Gastrocnemius medialis (tissue), 4 donors: ENCODE measurements at regions of chr14 and their contacts with region 1.

Region 1: GRCh38 chr14:55270832-55271565 is at the start of gene FBXO34:
- DNase-seq: peak; percentile 95 to 98
- ATAC-seq: peak; percentile 80 to 86
- H3K4me3 ChIP-seq: peak within 1 kb of the TSS; percentile 85 to 97 (median 94)
- H3K27ac ChIP-seq: peak within 1 kb of the TSS; percentile 95 to 99 (median 98)
- H3K4me1 ChIP-seq: peaks cover 30 to 33% of the 10 kb centered on the region in 2 donors
- H3K27me3 ChIP-seq: no peaks in the 10 kb centered on the region
- CTCF ChIP-seq: peak; percentile 99 to 100 (median 100)
- POLR2A ChIP-seq: peak; percentile 94 to 98
- total RNA-seq, gene FBXO34: 26.2 to 55.9 (median 40.7) TPM

Region 2: DNA sequence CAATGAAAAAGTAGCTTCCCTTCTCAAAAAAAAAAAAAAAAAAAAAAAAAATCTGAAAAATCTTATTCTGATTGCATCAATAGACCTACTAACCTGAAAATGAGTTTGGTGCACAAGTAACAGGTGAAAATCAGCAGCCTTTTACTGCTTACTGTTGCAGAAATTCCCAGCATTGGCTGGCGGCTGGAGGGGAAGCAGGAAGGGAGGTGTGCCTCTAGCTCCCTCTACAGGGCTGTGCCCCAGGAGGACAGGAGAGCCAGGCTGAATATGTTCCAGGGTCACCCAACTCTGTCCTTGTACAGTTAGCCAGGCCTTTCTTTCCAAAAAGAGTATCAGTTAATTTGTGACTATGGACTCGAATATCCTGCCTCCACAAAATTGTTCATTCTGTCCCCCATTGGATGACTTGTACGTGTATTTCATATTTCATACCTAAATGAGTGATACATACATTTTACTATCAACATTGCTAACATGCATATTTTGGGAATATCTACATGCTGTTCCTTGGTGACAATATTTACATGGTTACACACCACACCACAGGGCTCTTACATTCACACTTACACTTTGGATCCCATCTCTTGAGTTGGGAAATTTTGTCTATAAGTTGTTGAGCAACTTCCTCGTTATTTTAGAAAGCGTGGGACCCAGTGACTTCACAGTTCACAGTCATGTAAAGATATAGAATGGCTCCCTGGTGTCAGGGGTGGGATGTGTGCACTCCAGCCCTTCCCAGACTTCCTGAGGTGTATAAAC is 579.3 kb before region 1 on chr14:
- in situ Hi-C with region 1: no loop called
- intact Hi-C with region 1: loop called (anchors 10 kb)
- DNase-seq: peak; percentile 63 to 84
- ATAC-seq: peak; percentile 53 to 71
- H3K4me3 ChIP-seq: no peak overlapping the region
- H3K27ac ChIP-seq: peak overlapping the region; percentile 86 to 99 (median 92)
- H3K4me1 ChIP-seq: peaks cover 62 to 68% of the 10 kb centered on the region in 2 donors
- H3K27me3 ChIP-seq: no peaks in the 10 kb centered on the region
- CTCF ChIP-seq: peak; percentile 82 to 92 (median 89)
- POLR2A ChIP-seq: no peak

Region 3: GRCh38 chr14:55212634-55213033 is 58.4 kb before region 1 on chr14:
- in situ Hi-C with region 1: no loop called
- intact Hi-C with region 1: loop called (anchors 2 kb)
- DNase-seq: no peak
- ATAC-seq: no peak
- H3K4me3 ChIP-seq: no peak overlapping the region
- H3K27ac ChIP-seq: no peak overlapping the region
- H3K4me1 ChIP-seq: no peaks in the 10 kb centered on the region
- H3K27me3 ChIP-seq: no peaks in the 10 kb centered on the region
- CTCF ChIP-seq: no peak
- POLR2A ChIP-seq: no peak

Region 4: DNA sequence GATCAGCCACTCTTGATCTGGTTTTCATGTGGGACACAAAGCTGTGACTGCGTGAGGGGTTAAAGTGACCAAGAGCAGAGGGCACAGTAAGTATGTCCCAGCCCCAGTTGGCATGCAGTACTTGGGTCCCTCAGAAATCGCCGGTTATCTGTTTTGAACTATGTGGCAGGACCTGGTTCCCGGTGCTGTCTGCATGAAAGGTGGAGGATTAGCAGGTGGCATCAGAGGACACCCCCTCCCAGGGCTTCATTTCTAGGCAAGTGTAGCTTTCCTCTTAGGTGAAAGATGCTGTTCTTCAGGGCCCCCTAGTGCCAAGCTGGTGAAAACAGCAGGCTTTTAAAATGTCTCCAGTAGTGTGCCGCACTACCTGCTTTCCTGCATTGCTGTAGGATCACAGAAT is 83.5 kb after region 1 on chr14:
- in situ Hi-C with region 1: loop called in 2 of 4 experiments (anchors 10 kb)
- intact Hi-C with region 1: loop called (anchors 1 kb)
- DNase-seq: peak; percentile 27 to 59
- ATAC-seq: peak; percentile 79 to 91
- H3K4me3 ChIP-seq: no peak overlapping the region
- H3K27ac ChIP-seq: peak overlapping the region in 3 of 4 donors; percentile 64 to 74 (median 71)
- H3K4me1 ChIP-seq: peaks cover 11 to 14% of the 10 kb centered on the region in 2 donors
- H3K27me3 ChIP-seq: no peaks in the 10 kb centered on the region
- CTCF ChIP-seq: peak; percentile 40 to 67 (median 57)
- POLR2A ChIP-seq: no peak

Region 5: GRCh38 chr14:55411426-55412389 is 140.7 kb after region 1 on chr14 and contains the start of gene ATG14:
- in situ Hi-C with region 1: loop called in 2 of 4 experiments (anchors 5 to 10 kb)
- intact Hi-C with region 1: loop called (anchors 5 kb)
- DNase-seq: peak; percentile 81 to 88
- ATAC-seq: peak; percentile 94 to 98
- H3K4me3 ChIP-seq: peak within 1 kb of the TSS; percentile 82 to 98 (median 90)
- H3K27ac ChIP-seq: peak within 1 kb of the TSS; percentile 87 to 97 (median 95)
- H3K4me1 ChIP-seq: peaks cover 26 to 28% of the 10 kb centered on the region in 2 donors
- H3K27me3 ChIP-seq: no peaks in the 10 kb centered on the region
- CTCF ChIP-seq: peak in 2 of 5 experiments; percentile 9 to 15
- POLR2A ChIP-seq: peak; percentile 47 to 84
- total RNA-seq, gene ATG14: 12.6 to 20.0 (median 15.6) TPM

Region 6: GRCh38 chr14:55579724-55580469 is 308.9 kb after region 1 on chr14 and contains the start of gene KTN1:
- in situ Hi-C with region 1: no loop called
- intact Hi-C with region 1: loop called (anchors 5 kb)
- DNase-seq: peak; percentile 78 to 84
- ATAC-seq: peak; percentile 76 to 79
- H3K4me3 ChIP-seq: peak within 1 kb of the TSS; percentile 88 to 98 (median 97)
- H3K27ac ChIP-seq: peak within 1 kb of the TSS; percentile 98 to 99 (median 98)
- H3K4me1 ChIP-seq: peaks cover 45% of the 10 kb centered on the region in 2 donors
- H3K27me3 ChIP-seq: no peaks in the 10 kb centered on the region
- CTCF ChIP-seq: no peak
- POLR2A ChIP-seq: peak; percentile 91 to 96
- total RNA-seq, gene KTN1: 256 to 373 (median 327) TPM